G401 (cell line): ENCODE measurements at regions of chr10 and their contacts with region 1.

Region 1: GRCh38 chr10:103969857-103970627 is 3.1 kb downstream of the SLK start:
- DNase-seq: no peak

Region 2: GRCh38 chr10:104013489-104013888 is 43.4 kb after region 1 on chr10:
- in situ Hi-C with region 1: loop called (anchors 5 kb)
- DNase-seq: no peak